WTC11 (cell line): ENCODE measurements at regions of chr9 and their contacts with region 1.

Region 1: DNA sequence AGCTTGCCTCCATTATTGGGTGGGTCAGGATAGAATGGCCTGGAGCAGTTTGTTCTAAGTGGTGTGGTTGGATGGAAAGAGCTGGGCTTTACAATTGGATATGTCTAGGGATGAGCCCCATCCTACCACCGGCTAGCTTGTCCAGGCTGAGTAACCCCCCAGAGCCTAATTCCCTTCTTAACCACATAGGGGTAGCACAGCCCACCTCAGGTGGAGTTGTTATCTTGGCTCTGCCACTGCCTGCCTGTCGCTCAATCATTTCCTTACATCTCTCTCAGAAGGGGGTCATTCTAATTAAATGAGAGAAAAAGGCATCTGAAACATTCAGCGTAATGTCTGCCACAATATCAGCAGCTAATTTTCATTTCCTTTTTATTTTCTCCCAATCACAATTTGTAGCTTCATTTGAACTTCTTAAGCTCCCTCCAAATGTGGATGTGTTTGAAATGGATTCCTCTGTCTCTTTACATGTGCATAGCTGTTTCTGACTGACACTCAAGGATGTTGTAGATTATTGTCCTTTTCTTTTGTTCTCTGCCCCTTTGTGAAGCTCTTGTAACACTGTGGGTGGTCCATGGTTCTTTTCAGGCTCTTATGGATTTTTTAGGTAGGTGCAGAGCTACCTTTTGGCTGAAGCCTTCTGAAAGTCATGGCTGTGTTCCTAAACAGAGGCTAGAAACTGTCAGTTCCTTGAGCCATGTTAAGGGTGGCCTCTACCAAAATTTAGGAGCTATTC is 383.1 kb upstream of the KLF4 start:
- DNase-seq: peak; percentile 25
- ATAC-seq: peak; percentile 94
- H3K4me3 Mint-ChIP-seq: no peak overlapping the region
- H3K27ac Mint-ChIP-seq: 0 out of 2 replicates have a peak overlapping the region, but pooled peaks have one; percentile 3
- H3K4me1 Mint-ChIP-seq: peaks cover 26% of the 10 kb centered on the region
- H3K27me3 Mint-ChIP-seq: peaks cover 10% of the 10 kb centered on the region; the same call in 1 of the 2 replicates
- CTCF ChIP-seq: no peak

Region 2: GRCh38 chr9:107674721-107675277 is 197.8 kb before region 1 on chr9:
- CTCF ChIA-PET with region 1: no interaction called
- POLR2A ChIA-PET with region 1: no interaction called
- DNase-seq: peak; percentile 19
- ATAC-seq: peak; percentile 86
- H3K4me3 Mint-ChIP-seq: peak overlapping the region; percentile 51
- H3K27ac Mint-ChIP-seq: peak overlapping the region; percentile 100
- H3K4me1 Mint-ChIP-seq: peaks cover 37% of the 10 kb centered on the region
- H3K27me3 Mint-ChIP-seq: no peaks in the 10 kb centered on the region
- CTCF ChIP-seq: no peak

Region 3: GRCh38 chr9:107862323-107862722 is 10.3 kb before region 1 on chr9:
- CTCF ChIA-PET with region 1: interaction called, 13 read pairs
- POLR2A ChIA-PET with region 1: no interaction called
- DNase-seq: no peak
- ATAC-seq: no peak
- H3K4me3 Mint-ChIP-seq: no peak overlapping the region
- H3K27ac Mint-ChIP-seq: no peak overlapping the region
- H3K4me1 Mint-ChIP-seq: peaks cover 3% of the 10 kb centered on the region; the same call in 1 of the 2 replicates
- H3K27me3 Mint-ChIP-seq: no peaks in the 10 kb centered on the region
- CTCF ChIP-seq: no peak